SK-N-SH (cell line): ENCODE measurements at regions of chr20 and their contacts with region 1.

Region 1: GRCh38 chr20:9359561-9360308 is 154.7 kb upstream of the LAMP5 start:
- DNase-seq: peak; percentile 33
- H3K4me3 ChIP-seq: no peak overlapping the region; a peak in 1 of 4 replicates
- H3K27ac ChIP-seq: peak overlapping the region; percentile 11; a peak in 2 of 4 replicates
- H3K4me1 ChIP-seq: peaks cover 4 to 10% of the 10 kb centered on the region in 2 experiments; a peak in 1 of 4 replicates
- H3K27me3 ChIP-seq: no peaks in the 10 kb centered on the region
- CTCF ChIP-seq: peak; percentile 69
- EP300 ChIP-seq: no peak
- RAD21 ChIP-seq: peak; percentile 91

Region 2: DNA sequence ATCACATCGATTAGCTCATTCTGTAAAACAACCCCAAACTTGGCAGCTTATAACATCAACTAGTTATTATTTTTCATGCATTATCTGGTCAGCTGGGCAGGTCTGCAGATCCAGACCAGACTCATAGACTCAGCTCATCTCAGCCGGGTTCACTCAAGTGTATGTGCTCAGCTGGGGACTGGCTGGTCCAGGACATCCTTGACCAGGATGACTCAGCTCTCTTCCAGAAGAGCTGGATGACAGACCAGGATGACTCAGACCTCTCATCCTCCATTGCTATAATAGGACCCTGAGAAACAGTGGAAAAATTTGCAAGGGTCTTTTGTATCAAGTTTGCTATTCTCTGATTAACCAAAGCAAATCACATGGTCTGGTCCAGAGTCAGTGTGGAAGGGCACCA is 603.3 kb before region 1 on chr20:
- CTCF ChIA-PET with region 1: interaction called, 12 read pairs
- POLR2A ChIA-PET with region 1: no interaction called
- DNase-seq: no peak
- H3K4me3 ChIP-seq: no peak overlapping the region
- H3K27ac ChIP-seq: peak overlapping the region; percentile 30 to 96
- H3K4me1 ChIP-seq: peaks cover 0 to 16% of the 10 kb centered on the region in 2 experiments
- H3K27me3 ChIP-seq: no peaks in the 10 kb centered on the region
- CTCF ChIP-seq: no peak
- EP300 ChIP-seq: peak in 1 of 2 experiments; percentile 76; a peak in 1 of 4 replicates
- RAD21 ChIP-seq: no peak

Region 3: DNA sequence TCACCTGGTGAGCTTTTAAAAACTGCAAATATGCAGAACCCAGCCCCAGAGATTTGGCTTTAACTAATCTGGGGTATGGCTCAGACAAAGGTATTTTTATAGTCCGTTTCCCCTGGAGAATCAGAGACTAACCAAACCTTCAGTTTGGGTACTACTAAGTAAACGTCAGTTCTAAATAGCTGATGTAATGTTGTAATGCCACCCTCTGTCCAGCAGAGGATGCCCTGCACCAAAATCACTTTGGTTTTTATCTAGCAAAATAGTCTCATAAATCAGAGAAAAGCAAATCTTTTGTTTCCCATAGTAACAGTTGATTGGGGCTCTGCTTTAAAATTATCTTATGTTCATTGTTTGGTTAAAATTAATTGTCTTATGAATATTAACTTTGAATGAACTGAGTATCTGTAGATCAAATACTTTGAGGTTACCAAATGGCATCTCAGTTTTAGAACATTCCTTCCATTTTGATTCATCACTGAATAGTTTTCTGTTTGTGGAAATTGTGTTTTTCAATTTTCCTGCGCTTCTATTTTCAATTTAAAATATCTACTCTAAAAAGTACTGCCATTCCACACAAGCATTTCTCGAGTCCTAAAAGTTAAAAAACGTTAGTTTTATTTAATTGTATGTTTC is 569.2 kb before region 1 on chr20:
- CTCF ChIA-PET with region 1: interaction called, 14 read pairs
- POLR2A ChIA-PET with region 1: no interaction called
- DNase-seq: peak; percentile 50
- H3K4me3 ChIP-seq: no peak overlapping the region; a peak in 1 of 4 replicates
- H3K27ac ChIP-seq: peak overlapping the region in 1 of 2 experiments; percentile 31; a peak in 2 of 4 replicates
- H3K4me1 ChIP-seq: no peaks in the 10 kb centered on the region; a peak in 1 of 4 replicates
- H3K27me3 ChIP-seq: no peaks in the 10 kb centered on the region
- CTCF ChIP-seq: peak; percentile 98
- EP300 ChIP-seq: no peak
- RAD21 ChIP-seq: peak; percentile 84

Region 4: DNA sequence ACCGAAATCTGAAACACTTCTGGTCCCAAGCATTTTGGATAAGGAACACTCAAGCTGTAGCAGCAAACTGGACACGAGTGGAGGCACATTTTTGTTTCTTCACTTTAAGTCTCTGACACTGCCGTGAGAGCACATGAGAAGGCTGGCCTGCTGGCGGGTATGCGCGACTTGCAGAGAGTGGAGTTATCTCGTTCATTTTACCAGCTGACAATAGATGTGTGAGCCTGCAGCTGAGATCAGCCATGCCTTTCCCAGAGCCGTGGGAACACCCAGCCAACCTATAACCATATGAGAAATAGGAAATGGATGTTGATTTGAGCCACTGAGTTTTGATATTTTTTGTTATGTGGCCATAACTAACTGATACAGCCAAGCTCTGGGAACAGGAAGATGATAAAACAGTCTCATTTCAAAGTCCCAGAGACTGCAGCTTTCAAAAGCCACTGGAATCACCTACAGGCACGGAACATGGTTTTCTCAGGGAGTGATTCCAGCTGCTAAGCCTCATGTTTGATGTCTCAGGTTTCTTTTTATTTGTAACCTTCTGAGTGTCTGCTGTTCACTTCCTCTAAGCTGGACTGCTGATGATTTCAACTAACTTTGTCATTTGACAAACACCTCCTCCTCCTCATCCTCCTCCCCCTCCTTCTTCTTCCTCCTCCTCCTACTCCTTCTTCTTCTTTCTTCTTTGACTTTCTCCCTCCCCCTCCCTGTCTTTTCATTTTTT is 126.0 kb after region 1 on chr20:
- CTCF ChIA-PET with region 1: no interaction called
- POLR2A ChIA-PET with region 1: no interaction called
- DNase-seq: no peak
- H3K4me3 ChIP-seq: no peak overlapping the region
- H3K27ac ChIP-seq: no peak overlapping the region
- H3K4me1 ChIP-seq: peaks cover 0 to 19% of the 10 kb centered on the region in 2 experiments; a peak in 2 of 4 replicates
- H3K27me3 ChIP-seq: no peaks in the 10 kb centered on the region
- CTCF ChIP-seq: no peak
- EP300 ChIP-seq: no peak
- RAD21 ChIP-seq: no peak